Naive thymus-derived CD8-positive, alpha-beta T cell (primary cell): ENCODE measurements at regions of chr19 and their contacts with region 1.

Region 1: GRCh38 chr19:48469289-48469881 is at the start of gene CYTH2:
- DNase-seq: peak in 5 of 10 donors; percentile 51 to 84 (median 58)
- ATAC-seq: peak in 1 of 2 donors; percentile 15
- H3K4me3 Mint-ChIP-seq: peak within 1 kb of the TSS; percentile 84 to 99 (median 92)
- H3K27ac Mint-ChIP-seq: peak within 1 kb of the TSS; percentile 78 to 96 (median 94)
- H3K4me1 Mint-ChIP-seq: peaks cover 12 to 40% (median 29%) of the 10 kb centered on the region in 4 donors
- H3K27me3 Mint-ChIP-seq: no peaks in the 10 kb centered on the region
- polyA plus RNA-seq, gene CYTH2: 20.5 to 32.0 (median 28.2) TPM

Region 2: DNA sequence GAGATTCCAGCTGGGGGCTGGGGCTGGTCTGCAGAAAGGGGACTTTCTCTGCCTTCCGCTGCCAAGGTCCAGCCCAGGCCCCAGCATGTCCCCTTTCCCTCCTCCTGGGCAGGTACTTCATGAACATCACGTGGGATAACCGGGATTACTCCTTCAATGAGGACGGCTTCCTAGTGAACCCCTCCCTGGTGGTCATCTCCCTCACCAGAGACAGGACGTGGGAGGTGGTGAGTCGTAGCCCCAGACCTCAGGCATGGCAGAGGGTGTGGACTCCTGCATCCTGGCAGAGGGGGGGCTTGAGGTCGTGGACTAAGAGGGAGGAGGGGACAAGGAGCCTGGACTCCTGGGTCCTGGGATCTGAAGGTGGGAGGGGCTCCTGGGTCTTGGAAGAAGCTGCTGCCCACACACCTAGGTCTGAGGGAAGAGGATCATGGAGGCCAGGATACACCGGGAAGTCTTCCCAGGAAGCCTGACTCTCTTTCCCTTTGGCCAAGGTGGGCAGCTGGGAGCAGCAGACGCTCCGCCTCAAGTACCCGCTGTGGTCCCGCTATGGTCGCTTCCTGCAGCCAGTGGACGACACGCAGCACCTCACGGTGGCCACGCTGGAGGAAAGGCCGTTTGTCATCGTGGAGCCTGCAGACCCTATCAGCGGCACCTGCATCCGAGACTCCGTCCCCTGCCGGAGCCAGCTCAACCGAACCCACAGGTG is 55.4 kb before region 1 on chr19:
- POLR2A ChIA-PET with region 1: no interaction called
- DNase-seq: peak in 1 of 10 donors; percentile 57
- ATAC-seq: no peak
- H3K4me3 Mint-ChIP-seq: peak overlapping the region; percentile 51 to 88 (median 83)
- H3K27ac Mint-ChIP-seq: peak overlapping the region in 3 of 10 donors; percentile 15 to 51 (median 25)
- H3K4me1 Mint-ChIP-seq: peaks cover 12 to 26% (median 25%) of the 10 kb centered on the region in 4 donors
- H3K27me3 Mint-ChIP-seq: peaks cover 0 to 18% (median 9%) of the 10 kb centered on the region in 5 donors

Region 3: GRCh38 chr19:48480558-48481500 is 11.4 kb after region 1 on chr19:
- POLR2A ChIA-PET with region 1: interaction called, 20 read pairs
- DNase-seq: peak in 9 of 10 donors; percentile 44 to 77 (median 59)
- ATAC-seq: peak; percentile 83 to 84
- H3K4me3 Mint-ChIP-seq: peak overlapping the region; percentile 81 to 95 (median 86)
- H3K27ac Mint-ChIP-seq: peak overlapping the region; percentile 84 to 94 (median 91)
- H3K4me1 Mint-ChIP-seq: peaks cover 13 to 38% (median 25%) of the 10 kb centered on the region in 4 donors
- H3K27me3 Mint-ChIP-seq: no peaks in the 10 kb centered on the region

Region 4: DNA sequence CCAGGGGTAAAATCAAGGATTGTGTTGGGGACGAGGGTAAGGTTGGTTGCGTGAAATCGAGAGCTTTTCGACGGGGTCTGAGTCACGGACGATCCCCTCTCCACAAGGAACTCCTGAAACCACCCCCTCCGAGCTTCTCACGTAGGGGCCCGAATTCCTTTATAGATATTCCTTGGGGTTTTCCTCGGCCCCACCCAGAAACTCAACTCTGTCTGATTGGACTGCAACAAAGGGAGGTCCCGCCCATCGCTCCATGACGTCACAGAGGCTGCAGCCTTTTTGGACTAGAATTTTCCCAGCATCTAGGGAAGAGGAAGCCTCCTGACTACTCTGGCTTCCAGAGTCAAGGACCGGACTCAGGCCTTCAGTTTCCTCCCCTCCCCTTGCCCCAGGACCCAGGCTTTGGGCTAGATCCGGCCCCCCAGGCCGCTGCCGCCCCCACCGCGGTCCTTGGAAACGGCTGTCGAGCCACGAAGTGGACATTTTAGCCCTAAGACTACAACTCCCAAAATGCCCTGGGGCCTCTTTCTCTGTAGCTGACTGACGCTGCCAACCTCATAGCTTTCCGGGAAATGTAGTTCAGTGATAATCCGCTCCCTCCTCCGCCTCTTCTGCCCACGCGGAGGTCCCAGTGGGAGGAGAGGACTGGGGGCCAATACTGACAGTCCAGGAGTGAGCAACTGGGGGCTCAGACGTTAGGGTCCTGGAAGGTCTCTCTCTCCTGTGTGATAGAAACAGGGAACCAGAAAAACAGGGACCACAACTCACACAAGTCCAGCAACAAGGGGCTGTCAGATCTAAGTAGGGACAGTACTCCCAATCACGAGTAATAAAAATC is 277.6 kb after region 1 on chr19 and contains the start of gene IZUMO1:
- POLR2A ChIA-PET with region 1: no interaction called
- DNase-seq: peak in 7 of 10 donors; percentile 15 to 55 (median 48)
- ATAC-seq: peak; percentile 73 to 80
- H3K4me3 Mint-ChIP-seq: peak within 1 kb of the TSS in 5 of 10 donors; percentile 9 to 29 (median 14)
- H3K27ac Mint-ChIP-seq: peak within 1 kb of the TSS in 1 of 10 donors; percentile 21
- H3K4me1 Mint-ChIP-seq: peaks cover 6 to 18% (median 9%) of the 10 kb centered on the region in 4 donors
- H3K27me3 Mint-ChIP-seq: peaks cover 7 to 32% (median 17%) of the 10 kb centered on the region in 5 donors
- polyA plus RNA-seq, gene IZUMO1: not detected